Mammary epithelial cell (primary cell): ENCODE measurements at regions of chr3 and their contacts with region 1.

Region 1: GRCh38 chr3:63349583-63350521 is 71.7 kb downstream of the SYNPR start:
- DNase-seq: peak; percentile 39
- H3K4me3 ChIP-seq: no peak overlapping the region
- H3K27ac ChIP-seq: no peak overlapping the region
- H3K4me1 ChIP-seq: peaks cover 1% of the 10 kb centered on the region
- H3K27me3 ChIP-seq: no peaks in the 10 kb centered on the region
- CTCF ChIP-seq: peak; percentile 81 to 90

Region 2: GRCh38 chr3:63565220-63565619 is 215.4 kb after region 1 on chr3:
- CTCF ChIA-PET with region 1: no interaction called
- dilution Hi-C with region 1: no loop called
- in situ Hi-C with region 1: no loop called
- intact Hi-C with region 1: loop called (anchors 5 kb)
- DNase-seq: no peak
- H3K4me3 ChIP-seq: no peak overlapping the region
- H3K27ac ChIP-seq: no peak overlapping the region
- H3K4me1 ChIP-seq: no peaks in the 10 kb centered on the region
- H3K27me3 ChIP-seq: no peaks in the 10 kb centered on the region
- CTCF ChIP-seq: peak in 1 of 2 donors; percentile 31

Region 3: GRCh38 chr3:63661248-63661647 is 311.4 kb after region 1 on chr3:
- CTCF ChIA-PET with region 1: interaction called, 12 read pairs
- dilution Hi-C with region 1: no loop called
- in situ Hi-C with region 1: loop called in 1 of 2 experiments (anchors 25 kb)
- intact Hi-C with region 1: loop called (anchors 1 kb)
- DNase-seq: no peak
- H3K4me3 ChIP-seq: no peak overlapping the region
- H3K27ac ChIP-seq: no peak overlapping the region
- H3K4me1 ChIP-seq: peaks cover under 1% of the 10 kb centered on the region
- H3K27me3 ChIP-seq: no peaks in the 10 kb centered on the region
- CTCF ChIP-seq: peak; percentile 4 to 24

Region 4: DNA sequence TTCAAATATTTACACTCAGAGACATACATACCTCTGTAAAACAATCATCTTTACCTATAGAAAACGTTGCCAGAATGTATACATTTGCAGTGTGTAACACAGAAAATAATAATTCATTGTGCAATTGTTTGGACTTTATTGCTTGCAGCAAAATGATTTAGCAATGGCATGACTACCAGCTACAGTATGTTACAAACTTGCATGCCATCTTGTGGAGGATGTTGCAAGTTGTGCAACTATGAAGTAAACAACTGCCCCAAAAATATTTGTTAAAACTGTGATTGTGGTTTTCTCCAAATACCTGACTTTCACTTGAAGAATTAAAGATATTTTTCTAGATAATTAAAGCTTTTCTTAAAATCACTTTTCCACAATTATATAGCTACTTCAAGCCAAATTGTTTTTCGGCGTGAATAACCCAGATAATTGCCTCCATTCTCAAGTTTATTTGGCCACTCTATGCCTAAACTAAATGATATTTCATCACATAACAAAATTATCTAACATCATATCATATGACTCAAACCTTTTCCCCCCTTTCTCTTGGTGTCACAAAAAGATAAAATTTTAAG is 442.2 kb after region 1 on chr3:
- CTCF ChIA-PET with region 1: no interaction called
- dilution Hi-C with region 1: no loop called
- in situ Hi-C with region 1: no loop called
- intact Hi-C with region 1: loop called (anchors 1 kb)
- DNase-seq: peak; percentile 35
- H3K4me3 ChIP-seq: no peak overlapping the region
- H3K27ac ChIP-seq: no peak overlapping the region
- H3K4me1 ChIP-seq: no peaks in the 10 kb centered on the region
- H3K27me3 ChIP-seq: no peaks in the 10 kb centered on the region
- CTCF ChIP-seq: peak; percentile 35 to 66

Region 5: GRCh38 chr3:63818281-63819150 is 468.7 kb after region 1 on chr3:
- CTCF ChIA-PET with region 1: interaction called, 3 read pairs
- dilution Hi-C with region 1: loop called (anchors 5 kb)
- in situ Hi-C with region 1: loop called (anchors 5 kb)
- intact Hi-C with region 1: loop called (anchors 1 kb)
- DNase-seq: peak; percentile 33
- H3K4me3 ChIP-seq: no peak overlapping the region
- H3K27ac ChIP-seq: no peak overlapping the region
- H3K4me1 ChIP-seq: peaks cover 8% of the 10 kb centered on the region
- H3K27me3 ChIP-seq: no peaks in the 10 kb centered on the region
- CTCF ChIP-seq: peak; percentile 78 to 80

Region 6: GRCh38 chr3:63993653-63994079 is 643.8 kb after region 1 on chr3:
- CTCF ChIA-PET with region 1: no interaction called
- dilution Hi-C with region 1: no loop called
- in situ Hi-C with region 1: loop called in 1 of 2 experiments (anchors 25 kb)
- intact Hi-C with region 1: loop called (anchors 10 kb)
- DNase-seq: peak; percentile 82
- H3K4me3 ChIP-seq: no peak overlapping the region
- H3K27ac ChIP-seq: peak overlapping the region; percentile 50
- H3K4me1 ChIP-seq: peaks cover 10% of the 10 kb centered on the region
- H3K27me3 ChIP-seq: no peaks in the 10 kb centered on the region
- CTCF ChIP-seq: peak; percentile 97 to 99

Region 7: GRCh38 chr3:64484289-64484992 is 1134.6 kb after region 1 on chr3:
- CTCF ChIA-PET with region 1: no interaction called
- dilution Hi-C with region 1: no loop called
- in situ Hi-C with region 1: no loop called
- intact Hi-C with region 1: loop called (anchors 2 kb)
- DNase-seq: peak; percentile 58
- H3K4me3 ChIP-seq: no peak overlapping the region
- H3K27ac ChIP-seq: no peak overlapping the region
- H3K4me1 ChIP-seq: peaks cover 4% of the 10 kb centered on the region
- H3K27me3 ChIP-seq: no peaks in the 10 kb centered on the region
- CTCF ChIP-seq: peak; percentile 73 to 88